HepG2 (cell line): ENCODE measurements at regions of chr16 and their contacts with region 1.

Region 1: GRCh38 chr16:20928774-20929411 is 28.3 kb downstream of the LYRM1 start:
- DNase-seq: no peak
- ATAC-seq: no peak
- H3K4me3 ChIP-seq: no peak overlapping the region
- H3K27ac ChIP-seq: no peak overlapping the region
- H3K4me1 ChIP-seq: peaks cover 22% of the 10 kb centered on the region
- H3K27me3 ChIP-seq: no peaks in the 10 kb centered on the region
- CTCF ChIP-seq: no peak
- EP300 ChIP-seq: no peak
- POLR2A ChIP-seq: no peak
- RAD21 ChIP-seq: no peak

Region 2: DNA sequence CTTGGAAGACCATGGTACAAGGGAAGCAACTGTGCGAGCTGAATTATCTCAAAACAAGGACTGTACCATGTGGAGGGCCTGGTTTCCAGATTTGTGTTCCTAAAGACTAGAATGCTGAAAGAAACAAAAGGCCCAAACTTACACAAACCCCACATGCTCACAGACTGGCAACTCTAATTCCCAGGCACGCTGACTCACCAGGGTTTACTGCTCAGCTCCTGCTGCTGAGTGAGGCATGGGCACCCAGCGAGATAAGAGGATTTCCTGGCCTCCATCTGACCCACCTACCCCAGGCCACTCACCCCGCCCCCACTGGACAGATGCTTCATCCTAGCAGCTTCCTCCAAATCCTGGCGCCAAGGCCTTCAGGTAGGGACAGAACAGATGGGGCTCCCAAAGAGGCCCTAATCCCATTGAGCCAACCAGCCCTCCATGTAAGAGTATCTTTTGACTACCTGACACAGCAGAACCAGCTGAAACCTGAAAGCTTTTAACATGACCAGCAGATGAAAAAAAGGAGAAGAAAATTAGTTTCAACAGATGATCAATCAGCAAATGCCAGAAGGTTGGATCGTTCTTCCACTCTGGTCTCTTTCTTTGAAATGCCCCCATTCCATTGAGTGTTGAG is 62.6 kb before region 1 on chr16:
- CTCF ChIA-PET with region 1: no interaction called
- POLR2A ChIA-PET with region 1: no interaction called
- in situ Hi-C with region 1: no loop called
- intact Hi-C with region 1: loop called (anchors 5 kb)
- DNase-seq: peak; percentile 55
- ATAC-seq: peak; percentile 15; the same call in 1 of the 3 replicates
- H3K4me3 ChIP-seq: no peak overlapping the region
- H3K27ac ChIP-seq: peak overlapping the region; percentile 33
- H3K4me1 ChIP-seq: peaks cover 47% of the 10 kb centered on the region
- H3K27me3 ChIP-seq: no peaks in the 10 kb centered on the region
- CTCF ChIP-seq: no peak
- EP300 ChIP-seq: no peak
- POLR2A ChIP-seq: no peak
- RAD21 ChIP-seq: no peak

Region 3: DNA sequence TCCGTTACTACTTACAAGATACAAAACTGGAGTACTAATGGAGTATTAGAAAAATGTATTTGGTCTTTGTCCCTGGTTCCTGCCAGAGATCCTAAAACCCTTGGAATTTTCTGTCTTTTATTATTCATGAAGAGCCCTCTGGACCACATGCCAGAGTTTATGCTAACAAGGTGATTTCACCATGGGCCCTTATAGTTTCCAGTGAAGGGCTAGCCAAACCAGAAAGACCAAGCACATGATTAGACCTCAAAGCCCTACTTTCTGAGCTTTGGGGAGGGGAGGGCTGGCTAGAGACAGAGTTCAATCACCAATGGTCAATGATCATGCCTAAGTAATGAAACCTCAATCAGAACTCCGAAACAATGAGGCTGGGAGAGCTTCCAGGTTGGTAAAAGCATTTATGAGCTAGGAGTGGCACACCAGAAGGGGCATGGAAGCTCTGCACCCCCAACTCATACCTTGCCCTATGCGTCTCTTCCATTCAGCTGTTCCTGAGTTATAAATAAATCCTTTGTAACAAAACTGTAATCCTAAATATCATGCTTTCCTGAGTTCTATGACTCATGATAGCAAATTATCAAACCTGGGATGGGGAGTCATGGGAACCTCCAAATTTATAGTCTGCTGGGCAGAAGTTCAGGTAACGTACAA is 39.1 kb before region 1 on chr16:
- CTCF ChIA-PET with region 1: no interaction called
- POLR2A ChIA-PET with region 1: no interaction called
- in situ Hi-C with region 1: no loop called
- intact Hi-C with region 1: no loop called
- DNase-seq: no peak
- ATAC-seq: no peak
- H3K4me3 ChIP-seq: no peak overlapping the region
- H3K27ac ChIP-seq: peak overlapping the region; percentile 7
- H3K4me1 ChIP-seq: peaks cover 62% of the 10 kb centered on the region
- H3K27me3 ChIP-seq: no peaks in the 10 kb centered on the region
- CTCF ChIP-seq: no peak
- EP300 ChIP-seq: no peak
- POLR2A ChIP-seq: no peak
- RAD21 ChIP-seq: no peak

Region 4: GRCh38 chr16:20944861-20945574 is 16.1 kb after region 1 on chr16:
- CTCF ChIA-PET with region 1: no interaction called
- POLR2A ChIA-PET with region 1: no interaction called
- in situ Hi-C with region 1: no loop called
- intact Hi-C with region 1: no loop called
- DNase-seq: peak; percentile 35
- ATAC-seq: peak; percentile 40; the same call in 2 of the 3 replicates
- H3K4me3 ChIP-seq: no peak overlapping the region
- H3K27ac ChIP-seq: no peak overlapping the region
- H3K4me1 ChIP-seq: no peaks in the 10 kb centered on the region
- H3K27me3 ChIP-seq: peaks cover under 1 to 3% of the 10 kb centered on the region in 2 experiments; a peak in 2 of 5 replicates
- CTCF ChIP-seq: peak; percentile 65
- EP300 ChIP-seq: no peak
- POLR2A ChIP-seq: no peak
- RAD21 ChIP-seq: no peak

Region 5: DNA sequence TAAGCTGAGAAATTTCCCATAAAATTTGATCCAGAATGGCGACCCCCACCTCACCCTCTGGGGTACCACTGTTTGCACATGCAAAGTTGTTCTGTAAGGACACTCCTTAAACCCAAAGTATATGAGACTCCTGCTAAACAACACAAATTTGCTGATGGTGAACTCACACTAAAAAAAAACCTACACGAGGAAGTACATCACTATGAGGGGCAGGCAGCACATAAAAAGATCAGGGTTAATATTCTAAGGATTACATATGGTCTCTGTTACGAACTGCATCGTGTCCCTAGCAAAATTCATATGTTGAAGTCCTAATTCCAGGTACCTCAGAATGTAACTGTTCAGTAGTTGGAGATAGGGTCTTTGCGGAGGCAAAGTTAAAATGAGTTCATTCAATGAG is 32.0 kb after region 1 on chr16:
- CTCF ChIA-PET with region 1: no interaction called
- POLR2A ChIA-PET with region 1: no interaction called
- in situ Hi-C with region 1: no loop called
- intact Hi-C with region 1: loop called (anchors 1 kb)
- DNase-seq: no peak
- ATAC-seq: no peak
- H3K4me3 ChIP-seq: no peak overlapping the region
- H3K27ac ChIP-seq: no peak overlapping the region
- H3K4me1 ChIP-seq: no peaks in the 10 kb centered on the region
- H3K27me3 ChIP-seq: peaks cover 0 to 28% of the 10 kb centered on the region in 2 experiments; a peak in 3 of 5 replicates
- CTCF ChIP-seq: no peak
- EP300 ChIP-seq: no peak
- POLR2A ChIP-seq: no peak
- RAD21 ChIP-seq: no peak

Region 6: GRCh38 chr16:20995711-20996110 is 66.8 kb after region 1 on chr16:
- CTCF ChIA-PET with region 1: no interaction called
- POLR2A ChIA-PET with region 1: no interaction called
- in situ Hi-C with region 1: no loop called
- intact Hi-C with region 1: no loop called
- DNase-seq: no peak
- ATAC-seq: no peak
- H3K4me3 ChIP-seq: no peak overlapping the region
- H3K27ac ChIP-seq: no peak overlapping the region
- H3K4me1 ChIP-seq: no peaks in the 10 kb centered on the region
- H3K27me3 ChIP-seq: peaks cover 0 to 10% of the 10 kb centered on the region in 2 experiments; a peak in 2 of 5 replicates
- CTCF ChIP-seq: no peak
- EP300 ChIP-seq: no peak
- POLR2A ChIP-seq: no peak
- RAD21 ChIP-seq: no peak

Region 7: DNA sequence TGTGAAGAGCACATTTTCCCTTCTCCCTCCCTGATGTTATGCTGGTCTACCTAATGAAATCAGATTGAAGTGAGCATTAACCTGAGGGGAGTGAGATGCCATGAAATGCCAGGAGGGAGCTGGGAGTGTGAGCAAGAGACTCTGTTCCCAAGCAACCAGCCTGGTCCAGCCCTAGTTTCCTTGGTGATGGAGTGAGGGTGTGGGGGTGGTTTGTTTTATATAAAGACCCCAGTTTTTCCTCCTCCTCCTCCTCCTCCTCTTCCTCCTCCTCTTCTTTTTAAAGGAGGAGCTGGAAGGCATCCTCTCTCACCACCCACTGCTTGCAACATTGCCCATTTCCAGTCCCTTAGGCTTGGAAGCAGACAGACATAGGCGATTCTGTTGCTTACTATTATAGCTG is 124.7 kb after region 1 on chr16:
- CTCF ChIA-PET with region 1: no interaction called
- POLR2A ChIA-PET with region 1: no interaction called
- in situ Hi-C with region 1: no loop called
- intact Hi-C with region 1: no loop called
- DNase-seq: no peak
- ATAC-seq: no peak
- H3K4me3 ChIP-seq: no peak overlapping the region
- H3K27ac ChIP-seq: no peak overlapping the region
- H3K4me1 ChIP-seq: no peaks in the 10 kb centered on the region
- H3K27me3 ChIP-seq: peaks cover 8 to 57% of the 10 kb centered on the region in 2 experiments
- CTCF ChIP-seq: no peak
- EP300 ChIP-seq: no peak
- POLR2A ChIP-seq: no peak
- RAD21 ChIP-seq: no peak